Caco-2 (cell line): ENCODE measurements at regions of chr2 and their contacts with region 1.

Region 1: GRCh38 chr2:38750891-38751595 is at the start of gene SRSF7:
- DNase-seq: peak; percentile 97 to 99
- H3K4me3 ChIP-seq: peak within 1 kb of the TSS; percentile 90
- H3K4me3 Mint-ChIP-seq: peak within 1 kb of the TSS; percentile 99
- H3K27ac Mint-ChIP-seq: peak within 1 kb of the TSS; percentile 100
- H3K4me1 ChIP-seq: peaks cover 31% of the 10 kb centered on the region
- H3K4me1 Mint-ChIP-seq: peaks cover 50% of the 10 kb centered on the region
- H3K27me3 ChIP-seq: no peaks in the 10 kb centered on the region
- H3K27me3 Mint-ChIP-seq: peaks cover 3% of the 10 kb centered on the region
- CTCF ChIP-seq: no peak
- total RNA-seq, gene SRSF7: 224 and 233 TPM in 2 replicates

Region 2: DNA sequence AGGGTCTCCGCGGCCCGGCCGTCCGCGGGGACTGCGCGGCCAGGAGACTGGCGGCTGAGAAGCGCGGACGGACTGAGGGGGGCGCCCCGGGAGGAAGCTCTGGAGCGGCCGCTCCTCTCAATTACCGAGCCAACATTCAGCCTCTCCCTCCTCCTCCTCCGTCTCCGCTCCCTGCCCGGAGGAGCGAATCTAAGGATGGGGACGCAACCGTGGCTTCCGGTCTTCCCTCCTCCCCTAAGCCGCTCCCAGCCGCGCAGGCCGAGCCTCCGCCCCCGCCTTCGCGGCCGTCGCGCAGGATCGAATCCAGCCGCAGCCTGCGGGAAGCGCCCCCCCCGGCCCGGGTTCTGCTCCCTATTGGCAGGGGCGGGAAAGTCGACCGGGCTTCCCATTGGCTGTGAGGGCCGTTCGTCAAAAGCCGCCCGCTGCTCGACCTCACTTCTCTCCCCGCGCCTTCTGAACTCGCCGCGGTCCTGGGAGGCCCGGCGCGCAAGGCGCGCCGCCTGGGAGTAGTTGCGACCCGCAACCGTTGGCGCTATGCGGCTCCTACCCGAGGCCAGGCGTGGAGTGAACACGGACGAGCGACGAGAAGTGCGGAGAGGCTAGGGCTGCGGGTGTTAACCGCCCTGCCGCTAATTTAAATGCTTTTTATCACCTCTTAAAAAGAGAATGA is 148.2 kb before region 1 on chr2 and contains the start of gene HNRNPLL:
- CTCF ChIA-PET with region 1: no interaction called
- POLR2A ChIA-PET with region 1: interaction called, 38 read pairs
- intact Hi-C with region 1: no loop called
- DNase-seq: peak; percentile 99 to 100
- H3K4me3 ChIP-seq: peak within 1 kb of the TSS; percentile 87
- H3K4me3 Mint-ChIP-seq: peak within 1 kb of the TSS; percentile 92
- H3K27ac Mint-ChIP-seq: peak within 1 kb of the TSS; percentile 96
- H3K4me1 ChIP-seq: 0 out of 2 replicates have a peak, but pooled peaks cover 5% of the 10 kb centered on the region
- H3K4me1 Mint-ChIP-seq: peaks cover 6% of the 10 kb centered on the region
- H3K27me3 ChIP-seq: no peaks in the 10 kb centered on the region
- H3K27me3 Mint-ChIP-seq: no peaks in the 10 kb centered on the region
- CTCF ChIP-seq: peak in 1 of 2 experiments; percentile 12
- total RNA-seq, gene HNRNPLL: 58.0 and 59.4 TPM in 2 replicates

Region 3: GRCh38 chr2:38665854-38666555 is 85.0 kb before region 1 on chr2 and contains the start of gene GALM:
- CTCF ChIA-PET with region 1: no interaction called
- POLR2A ChIA-PET with region 1: interaction called, 19 read pairs
- intact Hi-C with region 1: no loop called
- DNase-seq: peak; percentile 95
- H3K4me3 ChIP-seq: peak within 1 kb of the TSS; percentile 67
- H3K4me3 Mint-ChIP-seq: peak within 1 kb of the TSS; percentile 95
- H3K27ac Mint-ChIP-seq: peak within 1 kb of the TSS; percentile 71
- H3K4me1 ChIP-seq: peaks cover 20% of the 10 kb centered on the region
- H3K4me1 Mint-ChIP-seq: peaks cover 36% of the 10 kb centered on the region
- H3K27me3 ChIP-seq: no peaks in the 10 kb centered on the region
- H3K27me3 Mint-ChIP-seq: no peaks in the 10 kb centered on the region
- CTCF ChIP-seq: no peak
- total RNA-seq, gene GALM: 48.5 and 48.7 TPM in 2 replicates

Region 4: GRCh38 chr2:38771632-38772031 is 20.6 kb after region 1 on chr2:
- CTCF ChIA-PET with region 1: interaction called, 4 read pairs
- POLR2A ChIA-PET with region 1: interaction called, 39 read pairs
- intact Hi-C with region 1: no loop called
- DNase-seq: no peak
- H3K4me3 ChIP-seq: no peak overlapping the region
- H3K4me3 Mint-ChIP-seq: no peak overlapping the region
- H3K27ac Mint-ChIP-seq: no peak overlapping the region
- H3K4me1 ChIP-seq: peaks cover 12% of the 10 kb centered on the region; the same call in 1 of the 2 replicates
- H3K4me1 Mint-ChIP-seq: peaks cover 8% of the 10 kb centered on the region
- H3K27me3 ChIP-seq: no peaks in the 10 kb centered on the region
- H3K27me3 Mint-ChIP-seq: no peaks in the 10 kb centered on the region
- CTCF ChIP-seq: no peak

Region 5: DNA sequence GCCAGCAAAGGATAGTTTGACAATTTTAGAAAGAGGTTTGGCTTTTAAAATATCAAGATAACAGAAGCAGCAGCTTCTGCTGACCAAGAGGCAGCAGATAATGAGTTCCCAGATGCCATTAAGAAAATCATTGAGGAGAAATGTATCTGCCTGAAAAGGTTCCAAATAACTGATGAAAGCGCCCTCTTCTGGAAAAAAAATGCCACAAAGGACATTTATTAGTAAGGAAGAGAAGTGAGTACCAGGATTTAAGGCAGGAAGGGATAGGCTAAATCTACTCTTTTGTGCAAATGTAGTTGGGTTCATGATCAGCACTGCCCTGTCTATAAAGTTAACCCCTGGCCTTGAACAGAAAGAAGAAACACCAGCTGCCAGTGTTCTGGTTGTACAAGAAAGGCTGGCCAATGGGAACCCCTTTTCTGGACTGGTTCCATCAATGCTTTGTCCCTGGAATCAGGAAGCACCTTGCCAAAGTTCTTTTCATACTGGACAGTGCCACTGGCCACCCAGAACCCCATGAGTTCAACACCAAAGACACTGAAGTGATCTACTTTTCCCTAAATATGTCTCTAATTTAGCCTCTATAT is 84.1 kb after region 1 on chr2:
- CTCF ChIA-PET with region 1: no interaction called
- POLR2A ChIA-PET with region 1: interaction called, 6 read pairs
- intact Hi-C with region 1: loop called (anchors 5 kb)
- DNase-seq: peak in 1 of 2 experiments; percentile 40
- H3K4me3 ChIP-seq: no peak overlapping the region
- H3K4me3 Mint-ChIP-seq: no peak overlapping the region
- H3K27ac Mint-ChIP-seq: no peak overlapping the region
- H3K4me1 ChIP-seq: no peaks in the 10 kb centered on the region
- H3K4me1 Mint-ChIP-seq: no peaks in the 10 kb centered on the region
- H3K27me3 ChIP-seq: no peaks in the 10 kb centered on the region
- H3K27me3 Mint-ChIP-seq: no peaks in the 10 kb centered on the region
- CTCF ChIP-seq: peak; percentile 44 to 48

Region 6: GRCh38 chr2:38922389-38922788 is 171.3 kb after region 1 on chr2:
- CTCF ChIA-PET with region 1: no interaction called
- POLR2A ChIA-PET with region 1: no interaction called
- intact Hi-C with region 1: no loop called
- DNase-seq: no peak
- H3K4me3 ChIP-seq: no peak overlapping the region
- H3K4me3 Mint-ChIP-seq: no peak overlapping the region
- H3K27ac Mint-ChIP-seq: no peak overlapping the region
- H3K4me1 ChIP-seq: no peaks in the 10 kb centered on the region
- H3K4me1 Mint-ChIP-seq: peaks cover 7% of the 10 kb centered on the region
- H3K27me3 ChIP-seq: no peaks in the 10 kb centered on the region; the same call in 1 of the 2 replicates
- H3K27me3 Mint-ChIP-seq: peaks cover 6% of the 10 kb centered on the region
- CTCF ChIP-seq: no peak

Region 7: GRCh38 chr2:39124000-39124745 is 373.1 kb after region 1 on chr2:
- CTCF ChIA-PET with region 1: no interaction called
- POLR2A ChIA-PET with region 1: interaction called, 12 read pairs
- intact Hi-C with region 1: no loop called
- DNase-seq: peak; percentile 99
- H3K4me3 ChIP-seq: peak overlapping the region; percentile 70
- H3K4me3 Mint-ChIP-seq: peak overlapping the region; percentile 91
- H3K27ac Mint-ChIP-seq: peak overlapping the region; percentile 92
- H3K4me1 ChIP-seq: peaks cover 22% of the 10 kb centered on the region
- H3K4me1 Mint-ChIP-seq: peaks cover 13% of the 10 kb centered on the region
- H3K27me3 ChIP-seq: no peaks in the 10 kb centered on the region
- H3K27me3 Mint-ChIP-seq: no peaks in the 10 kb centered on the region
- CTCF ChIP-seq: peak; percentile 81 to 90